GM10248 (cell line): ENCODE measurements at regions of chr4 and their contacts with region 1.

Region 1: DNA sequence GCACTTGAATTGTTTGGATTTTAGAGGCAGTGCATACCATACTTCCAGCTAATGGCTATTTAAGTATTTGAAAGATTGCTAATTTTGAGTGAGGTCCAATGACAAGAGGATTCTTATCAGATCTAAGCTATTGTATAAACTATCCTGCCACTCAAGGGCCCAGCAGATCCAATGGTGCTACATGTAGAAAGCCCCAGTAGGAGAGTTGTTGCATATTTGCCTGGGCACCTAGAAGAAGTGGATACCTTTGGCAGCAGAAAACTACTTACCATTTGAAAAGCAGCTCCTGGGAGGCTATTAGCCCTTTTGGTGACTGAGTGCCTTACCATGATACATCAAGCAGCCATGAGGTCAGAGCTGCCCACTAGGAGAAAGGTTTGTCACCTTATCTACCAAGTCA is 447.3 kb downstream of the C4orf33 start:
- DNase-seq: no peak
- CTCF ChIP-seq: no peak

Region 2: GRCh38 chr4:129526814-129527213 is 16.5 kb before region 1 on chr4:
- CTCF ChIA-PET with region 1: interaction called, 11 read pairs
- POLR2A ChIA-PET with region 1: no interaction called
- DNase-seq: no peak
- CTCF ChIP-seq: no peak

Region 3: GRCh38 chr4:129561886-129562285 is 18.6 kb after region 1 on chr4:
- CTCF ChIA-PET with region 1: no interaction called
- POLR2A ChIA-PET with region 1: no interaction called
- DNase-seq: no peak
- CTCF ChIP-seq: no peak